ENCODE measurements at regions of chr20 and their contacts with region 1.

Region 1: DNA sequence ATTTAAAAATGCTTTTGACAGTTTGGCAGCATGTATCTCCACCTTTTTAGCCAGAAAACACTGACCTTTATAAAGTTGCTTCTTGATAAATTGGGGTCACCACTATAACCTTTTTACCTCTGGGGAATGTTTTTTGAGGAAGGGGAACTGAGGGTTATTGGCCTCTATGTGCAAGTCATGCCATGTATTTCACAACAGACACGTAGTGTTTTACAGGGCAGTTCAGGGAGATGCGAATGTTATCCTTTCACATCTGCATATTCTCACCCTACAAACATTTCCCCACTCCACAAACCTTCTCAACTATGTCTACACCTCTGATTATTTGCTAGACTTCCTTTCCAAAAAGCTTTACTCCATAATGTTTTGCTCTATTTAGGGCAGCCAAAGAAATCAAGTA is 17.0 kb upstream of the SLA2 start:
- DNase-seq: no peak
- H3K4me3 ChIP-seq: no peak overlapping the region
- H3K27ac ChIP-seq: no peak overlapping the region
- H3K4me1 ChIP-seq: no peaks in the 10 kb centered on the region
- H3K27me3 ChIP-seq: no peaks in the 10 kb centered on the region
- CTCF ChIP-seq: no peak
- EP300 ChIP-seq: no peak
- POLR2A ChIP-seq: no peak

Region 2: DNA sequence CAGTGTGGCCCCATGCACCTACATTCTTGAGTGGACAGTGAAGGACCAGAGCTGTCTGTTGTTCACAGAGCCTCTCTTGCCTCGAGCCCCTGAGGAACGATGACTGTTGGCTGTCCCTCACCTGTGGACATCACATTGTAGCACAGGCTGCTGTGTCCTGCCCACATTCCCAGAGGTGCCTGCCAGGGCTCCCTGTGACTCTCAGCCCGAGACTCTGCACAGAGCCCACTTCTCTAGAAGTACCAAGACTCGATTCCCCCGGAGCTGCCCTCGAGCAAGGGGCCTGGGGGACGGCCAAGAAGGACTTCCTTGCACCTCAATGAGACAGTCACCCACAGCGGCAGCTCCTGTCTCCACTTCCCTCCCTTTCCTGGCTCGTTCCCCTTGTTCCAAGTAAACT is 385.5 kb before region 1 on chr20:
- in situ Hi-C with region 1: no loop called
- intact Hi-C with region 1: no loop called
- DNase-seq: no peak
- H3K4me3 ChIP-seq: no peak overlapping the region
- H3K27ac ChIP-seq: no peak overlapping the region
- H3K4me1 ChIP-seq: no peaks in the 10 kb centered on the region
- H3K27me3 ChIP-seq: peaks cover 22% of the 10 kb centered on the region
- CTCF ChIP-seq: no peak
- EP300 ChIP-seq: no peak
- POLR2A ChIP-seq: no peak

Region 3: GRCh38 chr20:36881888-36882287 is 218.9 kb after region 1 on chr20:
- in situ Hi-C with region 1: no loop called
- intact Hi-C with region 1: loop called (anchors 5 kb)
- DNase-seq: peak; percentile 36
- H3K4me3 ChIP-seq: no peak overlapping the region
- H3K27ac ChIP-seq: peak overlapping the region; percentile 24 to 61 (median 50)
- H3K4me1 ChIP-seq: peaks cover 0 to 21% (median 1%) of the 10 kb centered on the region in 4 donors
- H3K27me3 ChIP-seq: no peaks in the 10 kb centered on the region
- CTCF ChIP-seq: no peak
- EP300 ChIP-seq: no peak
- POLR2A ChIP-seq: no peak

Measured in transverse colon (tissue), 4 donors.